OCI-LY7 (cell line): ENCODE measurements at regions of chr10 and their contacts with region 1.

Region 1: GRCh38 chr10:97686962-97687784 is at the start of gene AVPI1:
- DNase-seq: peak; percentile 95
- H3K4me3 ChIP-seq: peak within 1 kb of the TSS; percentile 70
- H3K27ac ChIP-seq: no peak within 1 kb of the TSS
- H3K4me1 ChIP-seq: peaks cover 17% of the 10 kb centered on the region
- CTCF ChIP-seq: no peak
- total RNA-seq, gene AVPI1: 2.8 and 4.6 TPM in 2 replicates

Region 2: GRCh38 chr10:97292097-97292862 is 394.9 kb before region 1 on chr10 and contains the start of gene ARHGAP19:
- CTCF ChIA-PET with region 1: no interaction called
- POLR2A ChIA-PET with region 1: interaction called, 10 read pairs
- intact Hi-C with region 1: no loop called
- DNase-seq: peak; percentile 98
- H3K4me3 ChIP-seq: peak within 1 kb of the TSS; percentile 89
- H3K27ac ChIP-seq: peak within 1 kb of the TSS; percentile 84
- H3K4me1 ChIP-seq: peaks cover 26% of the 10 kb centered on the region
- CTCF ChIP-seq: peak; percentile 43; the same call in 1 of the 2 replicates
- total RNA-seq, gene ARHGAP19: 33.3 and 34.1 TPM in 2 replicates

Region 3: GRCh38 chr10:97676770-97677581 is 10.2 kb before region 1 on chr10:
- CTCF ChIA-PET with region 1: interaction called, 10 read pairs
- POLR2A ChIA-PET with region 1: interaction called, 3 read pairs
- intact Hi-C with region 1: no loop called
- DNase-seq: peak; percentile 69
- H3K4me3 ChIP-seq: no peak overlapping the region
- H3K27ac ChIP-seq: no peak overlapping the region
- H3K4me1 ChIP-seq: peaks cover 9% of the 10 kb centered on the region
- CTCF ChIP-seq: peak; percentile 84

Region 4: DNA sequence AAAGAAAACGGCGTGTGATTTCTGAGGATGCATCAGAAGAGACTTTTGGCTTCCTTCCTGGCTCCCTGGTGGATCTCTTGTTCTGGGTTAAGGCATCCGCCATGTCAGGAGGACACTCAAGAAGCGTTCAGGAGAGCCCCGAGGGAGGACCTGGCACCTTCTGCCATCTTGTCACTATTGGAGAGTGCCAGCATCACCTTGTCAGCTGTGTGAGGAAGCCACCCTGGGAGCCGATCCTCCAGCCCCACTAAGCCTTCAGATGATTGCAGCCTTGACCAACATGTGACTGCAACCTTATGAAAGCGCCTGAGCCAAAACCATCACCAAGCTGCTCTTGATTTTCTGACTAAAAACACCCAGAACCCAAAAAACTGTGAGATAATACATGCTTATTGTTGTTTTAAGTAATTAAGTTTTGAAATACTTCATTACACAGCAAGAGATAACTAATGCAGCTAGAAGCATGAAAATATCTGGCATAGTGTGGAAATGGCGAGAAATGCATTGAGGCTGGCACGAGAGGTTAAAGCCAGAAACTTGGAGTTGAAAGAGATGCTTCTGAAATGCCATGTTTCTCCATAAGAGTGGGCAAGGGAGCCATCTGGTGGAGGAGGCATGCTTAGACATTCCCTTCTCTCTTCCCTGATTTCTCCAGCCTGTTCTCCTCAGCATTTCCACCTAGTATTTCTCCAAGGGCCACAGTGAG is 44.3 kb after region 1 on chr10:
- CTCF ChIA-PET with region 1: interaction called, 12 read pairs
- POLR2A ChIA-PET with region 1: interaction called, 18 read pairs
- intact Hi-C with region 1: loop called (anchors 2 kb)
- DNase-seq: peak; percentile 67
- H3K4me3 ChIP-seq: no peak overlapping the region
- H3K27ac ChIP-seq: no peak overlapping the region
- H3K4me1 ChIP-seq: peaks cover 9% of the 10 kb centered on the region
- CTCF ChIP-seq: peak; percentile 88

Region 5: GRCh38 chr10:97736902-97737769 is 50.0 kb after region 1 on chr10 and contains the start of gene ZFYVE27:
- CTCF ChIA-PET with region 1: interaction called, 12 read pairs
- POLR2A ChIA-PET with region 1: interaction called, 18 read pairs
- intact Hi-C with region 1: no loop called
- DNase-seq: peak; percentile 95
- H3K4me3 ChIP-seq: peak within 1 kb of the TSS; percentile 88
- H3K27ac ChIP-seq: peak within 1 kb of the TSS; percentile 39
- H3K4me1 ChIP-seq: peaks cover 24% of the 10 kb centered on the region
- CTCF ChIP-seq: no peak
- total RNA-seq, gene ZFYVE27: 24.0 and 25.5 TPM in 2 replicates

Region 6: DNA sequence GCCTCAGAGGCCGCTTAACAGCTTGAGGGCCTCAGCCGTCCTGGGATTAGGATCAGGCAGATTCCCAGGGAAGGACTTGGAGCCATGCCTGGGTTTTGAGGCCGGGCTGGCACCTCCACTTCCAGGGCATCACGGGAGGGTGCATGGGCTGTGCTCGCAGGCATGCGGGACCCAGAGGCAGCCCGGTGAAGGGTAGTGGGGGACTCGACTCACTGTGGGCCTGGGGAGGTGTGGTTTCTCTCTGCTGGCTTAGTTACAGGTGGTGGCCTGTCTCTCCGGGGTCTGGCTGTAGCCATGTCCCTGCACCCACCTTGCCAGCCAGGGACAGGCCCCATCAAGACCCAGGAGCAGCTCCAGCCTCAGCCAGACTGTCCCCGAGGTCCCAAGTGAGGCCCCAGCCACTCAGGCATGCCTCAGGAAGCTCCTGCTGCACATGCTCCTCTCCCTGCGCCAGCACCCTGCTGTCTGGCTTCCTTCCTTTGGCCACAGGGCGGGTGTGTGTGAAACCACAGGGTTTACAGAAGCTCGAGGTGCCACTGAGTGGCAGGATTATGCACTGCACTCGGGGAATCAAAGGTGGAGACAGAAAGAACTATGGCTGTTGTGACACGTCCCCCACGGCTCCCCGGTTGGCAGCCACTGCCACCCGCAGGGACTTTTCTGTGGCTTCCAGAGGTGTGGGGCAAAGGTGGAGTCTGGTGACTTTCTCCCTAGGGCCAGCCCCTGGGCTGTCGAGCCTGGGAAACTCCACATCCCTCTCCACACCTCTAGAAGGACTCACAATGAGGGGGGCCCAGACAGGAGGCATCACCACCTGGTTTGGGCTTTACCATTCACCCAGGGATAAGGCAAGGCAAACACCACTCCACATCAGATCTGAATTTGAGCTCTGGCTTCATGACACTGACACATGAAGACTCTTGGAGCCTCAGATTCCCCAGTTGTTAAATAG is 182.2 kb after region 1 on chr10:
- CTCF ChIA-PET with region 1: no interaction called
- POLR2A ChIA-PET with region 1: interaction called, 3 read pairs
- intact Hi-C with region 1: loop called (anchors 10 kb)
- DNase-seq: peak; percentile 85
- H3K4me3 ChIP-seq: no peak overlapping the region
- H3K27ac ChIP-seq: no peak overlapping the region
- H3K4me1 ChIP-seq: peaks cover 11% of the 10 kb centered on the region
- CTCF ChIP-seq: peak; percentile 82

Region 7: GRCh38 chr10:98316661-98317060 is 629.5 kb after region 1 on chr10:
- CTCF ChIA-PET with region 1: no interaction called
- POLR2A ChIA-PET with region 1: no interaction called
- intact Hi-C with region 1: no loop called
- DNase-seq: no peak
- H3K4me3 ChIP-seq: no peak overlapping the region
- H3K27ac ChIP-seq: no peak overlapping the region
- H3K4me1 ChIP-seq: no peaks in the 10 kb centered on the region
- CTCF ChIP-seq: no peak